B cell (primary cell): ENCODE measurements at regions of chrX and their contacts with region 1.

Region 1: DNA sequence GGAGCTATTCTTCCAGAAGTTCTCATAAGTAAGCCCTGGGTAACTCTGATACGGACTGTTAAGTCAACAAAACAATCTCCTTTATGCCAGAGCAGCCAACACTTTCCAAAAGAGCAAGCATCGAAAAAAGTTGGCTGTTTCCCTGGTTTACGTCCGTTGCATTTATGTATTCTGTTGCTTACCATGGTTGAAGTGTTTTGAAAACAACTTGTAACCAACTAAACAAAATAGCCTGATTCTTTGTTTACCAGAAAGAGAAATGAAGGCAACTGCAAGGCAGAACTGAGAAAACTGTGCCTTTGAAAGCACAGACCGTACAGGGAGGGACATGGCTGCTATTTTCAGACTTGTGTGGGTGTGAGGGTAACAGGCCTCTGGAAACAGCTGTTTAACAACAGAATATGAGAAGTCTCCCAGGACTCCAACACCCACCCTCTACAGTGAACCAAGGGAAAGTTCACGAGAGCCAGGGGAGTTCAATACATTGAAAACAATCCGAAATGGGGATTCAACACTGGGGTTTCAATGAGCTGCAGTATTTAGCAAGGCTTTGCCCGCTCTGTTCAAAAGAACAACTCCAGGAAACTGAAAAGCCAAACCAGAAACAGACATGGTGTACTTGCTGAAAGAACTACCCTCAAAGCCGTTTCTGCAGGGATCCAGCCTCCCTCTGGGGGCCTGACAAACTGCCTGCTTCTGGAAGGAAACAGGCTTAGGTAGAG is 95.8 kb upstream of the EGFL6 start:
- DNase-seq: peak; percentile 55
- ATAC-seq: peak; percentile 77
- H3K4me3 ChIP-seq: peak overlapping the region; percentile 5 to 54 (median 34)
- H3K4me3 Mint-ChIP-seq: peak overlapping the region; percentile 87
- H3K27ac ChIP-seq: peak overlapping the region; percentile 91 to 97
- H3K27ac Mint-ChIP-seq: peak overlapping the region; percentile 99
- H3K4me1 ChIP-seq: peaks cover 46 to 53% of the 10 kb centered on the region in 2 donors
- H3K4me1 Mint-ChIP-seq: peaks cover 58% of the 10 kb centered on the region
- H3K27me3 ChIP-seq: no peaks in the 10 kb centered on the region
- H3K27me3 Mint-ChIP-seq: no peaks in the 10 kb centered on the region
- CTCF ChIP-seq: no peak

Region 2: DNA sequence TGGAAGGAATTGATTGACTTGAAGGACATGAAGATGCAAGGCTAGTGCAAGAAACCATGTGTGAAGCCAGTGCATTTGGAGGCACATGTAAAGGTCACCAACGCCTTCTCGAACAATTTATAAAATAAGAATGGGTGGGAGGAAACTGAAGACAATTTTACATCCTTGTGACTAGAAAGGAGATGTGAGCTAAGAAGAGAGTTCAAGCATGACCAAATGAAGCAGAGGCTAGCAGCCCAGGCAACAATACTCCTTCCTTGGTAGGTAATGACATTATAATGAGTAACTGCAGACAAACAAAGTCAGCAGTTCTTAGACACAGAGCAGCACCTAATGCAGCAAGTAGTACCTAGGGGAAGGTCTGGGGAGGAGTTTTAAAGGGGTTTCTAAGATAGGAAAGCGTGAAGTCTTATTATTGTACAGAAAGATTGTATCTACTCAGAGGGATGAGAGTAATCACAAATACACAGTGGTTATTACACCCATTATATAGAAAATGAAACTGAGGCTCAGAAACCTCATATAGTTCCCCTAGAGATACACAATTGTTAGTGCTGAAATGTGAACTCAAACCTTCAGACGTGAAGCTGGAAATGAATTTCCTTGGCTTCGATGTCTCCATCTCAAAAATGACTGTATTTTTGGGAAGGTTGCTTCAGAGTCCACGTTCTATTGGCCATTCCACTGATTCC is 209.9 kb before region 1 on chrX:
- CTCF ChIA-PET with region 1: no interaction called
- POLR2A ChIA-PET with region 1: no interaction called
- intact Hi-C with region 1: loop called (anchors 5 kb)
- DNase-seq: peak; percentile 58
- ATAC-seq: peak; percentile 88
- H3K4me3 ChIP-seq: peak overlapping the region in 1 of 5 experiments; percentile 12
- H3K4me3 Mint-ChIP-seq: peak overlapping the region; percentile 66
- H3K27ac ChIP-seq: peak overlapping the region; percentile 56 to 72
- H3K27ac Mint-ChIP-seq: no peak overlapping the region
- H3K4me1 ChIP-seq: peaks cover 23 to 27% of the 10 kb centered on the region in 2 donors
- H3K4me1 Mint-ChIP-seq: peaks cover 18% of the 10 kb centered on the region
- H3K27me3 ChIP-seq: no peaks in the 10 kb centered on the region
- H3K27me3 Mint-ChIP-seq: no peaks in the 10 kb centered on the region
- CTCF ChIP-seq: no peak

Region 3: DNA sequence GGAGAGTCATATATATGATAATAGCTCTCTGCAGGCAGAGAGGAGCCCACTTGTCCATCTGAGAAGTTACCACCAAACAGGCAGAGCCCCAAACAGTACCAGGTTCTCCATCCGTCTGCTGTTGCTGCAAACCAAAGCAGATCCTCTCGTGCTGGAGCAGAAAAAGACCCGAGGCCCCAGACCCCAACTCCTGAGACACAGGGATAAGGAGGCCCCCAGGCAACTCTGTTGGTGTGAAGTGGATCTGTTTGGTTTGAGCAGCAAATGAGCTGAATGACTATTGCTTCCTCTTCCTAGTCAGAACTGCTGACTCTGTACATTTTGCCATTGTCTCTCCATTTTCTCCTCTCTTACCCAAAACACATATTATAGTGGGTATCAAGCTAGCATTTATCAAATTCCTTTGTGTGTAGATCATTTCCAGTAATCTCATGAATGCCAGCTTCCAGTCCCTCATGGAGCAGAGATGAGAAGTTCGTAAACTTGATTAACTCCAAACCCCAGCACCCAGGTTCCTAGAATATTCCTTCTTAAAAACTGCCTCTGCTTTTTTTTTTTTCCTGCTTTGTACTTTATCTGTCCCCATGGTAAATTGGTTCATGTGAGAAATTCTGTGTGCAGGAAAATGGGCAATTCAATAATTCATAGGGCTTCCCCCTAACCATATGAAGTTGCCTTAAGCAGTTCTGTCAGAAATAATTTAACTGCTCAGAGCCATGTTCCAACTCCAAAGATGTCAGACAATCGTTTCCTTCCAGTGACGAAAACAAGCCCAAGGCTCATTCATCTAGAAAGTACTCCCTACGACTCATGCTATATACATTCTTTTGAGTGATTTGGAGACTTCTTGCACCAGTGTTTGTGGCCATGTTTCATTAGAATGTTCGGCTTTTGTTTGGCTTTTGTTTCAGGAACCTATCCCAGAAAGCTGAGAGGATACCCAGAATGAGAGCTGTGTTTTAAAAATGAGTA is 55.2 kb before region 1 on chrX:
- CTCF ChIA-PET with region 1: no interaction called
- POLR2A ChIA-PET with region 1: no interaction called
- intact Hi-C with region 1: loop called (anchors 5 kb)
- DNase-seq: no peak
- ATAC-seq: no peak
- H3K4me3 ChIP-seq: no peak overlapping the region
- H3K4me3 Mint-ChIP-seq: peak overlapping the region; percentile 87
- H3K27ac ChIP-seq: peak overlapping the region; percentile 72 to 77
- H3K27ac Mint-ChIP-seq: peak overlapping the region; percentile 95
- H3K4me1 ChIP-seq: peaks cover 50 to 59% of the 10 kb centered on the region in 2 donors
- H3K4me1 Mint-ChIP-seq: peaks cover 73% of the 10 kb centered on the region
- H3K27me3 ChIP-seq: no peaks in the 10 kb centered on the region
- H3K27me3 Mint-ChIP-seq: no peaks in the 10 kb centered on the region
- CTCF ChIP-seq: no peak